Heart left ventricle (tissue), 16 donors: ENCODE measurements at regions of chr7 and their contacts with region 1.

Region 1: DNA sequence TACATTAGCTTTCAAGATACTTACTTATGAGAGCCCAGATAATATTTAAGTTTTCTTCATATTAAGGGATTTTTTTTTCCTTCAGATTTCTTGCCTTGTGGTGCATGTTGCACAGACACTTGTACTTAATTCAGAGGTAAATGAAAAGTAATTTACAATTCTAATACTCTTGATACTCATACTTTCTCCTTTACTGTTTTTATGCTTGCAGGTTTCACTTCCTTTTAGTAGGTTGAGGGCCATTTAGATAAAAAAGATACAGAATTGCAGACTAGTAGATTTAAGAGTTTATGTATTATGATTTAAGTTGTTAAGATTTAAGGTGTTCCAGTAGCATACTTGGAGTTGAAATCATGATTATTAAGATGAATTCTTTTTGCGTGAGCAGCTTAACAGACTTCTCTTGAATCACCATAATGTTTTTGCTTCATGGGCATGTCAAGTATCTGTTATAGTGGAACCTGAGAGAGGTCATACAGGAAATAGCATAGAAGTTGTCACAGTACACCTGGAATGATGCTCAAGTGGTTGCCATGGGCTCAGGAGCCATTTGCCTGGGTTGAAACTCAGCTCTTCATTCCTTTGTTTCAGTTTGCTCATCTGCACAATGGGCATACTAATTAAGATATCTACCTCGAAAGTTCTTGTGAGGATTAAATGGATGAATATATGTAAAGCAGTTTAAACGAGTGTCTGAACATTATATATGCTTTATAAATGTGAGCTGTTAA is 174.8 kb upstream of the PRPS1L1 start:
- DNase-seq: no peak
- ATAC-seq: no peak
- H3K4me3 ChIP-seq: no peak overlapping the region
- H3K27ac ChIP-seq: peak overlapping the region in 1 of 12 donors; percentile 12
- H3K4me1 ChIP-seq: peaks cover 0 to 20% (median 7%) of the 10 kb centered on the region in 12 donors
- H3K27me3 ChIP-seq: no peaks in the 10 kb centered on the region
- CTCF ChIP-seq: no peak
- POLR2A ChIP-seq: no peak

Region 2: GRCh38 chr7:18508443-18509427 is 306.3 kb after region 1 on chr7:
- intact Hi-C with region 1: loop called in 1 of 10 experiments (anchors 10 kb)
- DNase-seq: peak in 2 of 5 donors; percentile 22 to 38
- ATAC-seq: peak; percentile 86 to 94 (median 89)
- H3K4me3 ChIP-seq: peak overlapping the region in 10 of 12 donors; percentile 9 to 57 (median 45)
- H3K27ac ChIP-seq: peak overlapping the region; percentile 14 to 90 (median 74)
- H3K4me1 ChIP-seq: peaks cover 0 to 48% (median 23%) of the 10 kb centered on the region in 12 donors
- H3K27me3 ChIP-seq: no peaks in the 10 kb centered on the region
- CTCF ChIP-seq: no peak
- POLR2A ChIP-seq: no peak